ENCODE measurements at regions of chr14 and their contacts with region 1.

Region 1: GRCh38 chr14:99628832-99629618 is 15.9 kb upstream of the HHIPL1 start:
- H3K4me3 ChIP-seq: no peak overlapping the region
- H3K27ac ChIP-seq: no peak overlapping the region
- H3K4me1 ChIP-seq: no peaks in the 10 kb centered on the region
- CTCF ChIP-seq: peak; percentile 98

Region 2: DNA sequence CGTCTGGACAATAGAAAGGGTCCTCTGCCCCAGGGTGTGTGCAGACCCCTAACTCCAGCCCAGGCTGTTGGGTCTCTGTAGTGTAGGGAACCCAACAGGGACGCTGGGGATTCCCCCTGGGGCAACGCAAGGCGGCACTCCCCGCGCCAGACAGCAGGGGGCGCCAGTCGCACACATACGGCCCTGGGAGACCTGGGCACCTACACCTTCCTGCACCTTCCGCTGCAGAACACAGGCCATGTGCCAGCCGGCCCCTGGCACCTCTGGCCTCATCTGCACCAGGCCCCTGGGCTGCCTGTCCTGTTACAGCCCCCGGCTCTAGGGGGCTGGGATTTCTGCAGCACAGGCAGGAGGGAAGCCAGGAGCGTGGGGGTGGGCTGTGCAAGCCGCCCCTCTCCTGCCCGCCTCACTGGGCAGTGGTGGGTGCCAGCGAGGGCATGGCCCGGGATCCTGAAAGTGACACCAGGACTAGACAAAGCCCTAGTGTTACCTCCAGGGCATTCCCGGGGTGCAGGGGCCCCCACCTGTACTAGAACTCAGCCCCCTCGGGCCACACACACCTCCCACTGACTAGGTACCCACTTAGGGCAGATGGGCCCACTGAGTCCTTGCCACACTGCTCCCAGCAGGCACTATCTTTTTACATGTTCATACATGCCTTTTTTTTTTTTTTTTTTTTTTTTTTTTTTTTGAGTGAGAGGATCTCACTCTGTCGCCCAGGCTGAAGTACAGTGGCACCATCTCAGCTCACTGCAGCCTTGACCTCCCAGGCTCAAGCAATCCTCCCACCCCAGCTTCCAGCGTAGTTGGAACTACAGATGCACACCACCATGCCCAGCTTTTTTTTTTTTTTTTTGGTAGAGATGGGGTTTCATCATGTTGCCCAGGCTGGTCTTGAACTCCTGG is 110.3 kb before region 1 on chr14:
- CTCF ChIA-PET with region 1: interaction called, 10 read pairs
- POLR2A ChIA-PET with region 1: no interaction called
- H3K4me3 ChIP-seq: no peak overlapping the region
- H3K27ac ChIP-seq: no peak overlapping the region
- H3K4me1 ChIP-seq: peaks cover 15% of the 10 kb centered on the region
- CTCF ChIP-seq: peak; percentile 95